Heart right ventricle (tissue), 16 donors: ENCODE measurements at regions of chr20 and their contacts with region 1.

Region 1: GRCh38 chr20:25025986-25026605 is 31.8 kb downstream of the ACSS1 start:
- DNase-seq: no peak
- ATAC-seq: peak in 4 of 8 donors; percentile 31 to 50 (median 34)
- H3K4me3 ChIP-seq: no peak overlapping the region
- H3K27ac ChIP-seq: peak overlapping the region in 1 of 10 donors; percentile 31
- H3K4me1 ChIP-seq: peaks cover 0 to 76% (median 32%) of the 10 kb centered on the region in 9 donors
- H3K27me3 ChIP-seq: no peaks in the 10 kb centered on the region
- CTCF ChIP-seq: no peak

Region 2: DNA sequence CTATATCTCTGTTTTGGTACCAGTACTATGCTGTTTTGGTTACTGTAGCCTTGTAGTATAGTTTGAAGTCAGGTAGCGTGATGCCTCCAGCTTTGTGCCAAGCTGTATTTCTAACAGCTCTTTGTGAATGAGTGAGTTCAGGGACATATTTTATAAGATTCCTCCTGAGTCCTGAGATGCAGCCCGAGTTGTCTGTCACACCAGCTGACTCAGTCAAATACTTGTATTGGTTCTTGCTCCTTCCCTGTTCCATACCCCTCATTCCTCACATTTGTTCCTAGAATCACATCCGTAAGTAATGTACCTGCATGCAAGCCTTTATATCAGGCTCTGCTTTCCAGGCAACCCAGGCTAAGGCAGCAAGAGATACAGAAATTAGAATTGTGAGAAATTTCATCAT is 23.5 kb before region 1 on chr20:
- intact Hi-C with region 1: loop called in 1 of 10 experiments (anchors 2 kb)
- DNase-seq: no peak
- ATAC-seq: no peak
- H3K4me3 ChIP-seq: no peak overlapping the region
- H3K27ac ChIP-seq: no peak overlapping the region
- H3K4me1 ChIP-seq: peaks cover 7 to 58% (median 28%) of the 10 kb centered on the region in 9 donors
- H3K27me3 ChIP-seq: no peaks in the 10 kb centered on the region
- CTCF ChIP-seq: no peak